K562 (cell line): ENCODE measurements at regions of chr11 and their contacts with region 1.

Region 1: GRCh38 chr11:34600339-34601084 is 20.4 kb upstream of the EHF start:
- DNase-seq: peak; percentile 86 to 93 (median 88)
- ATAC-seq: peak; percentile 82
- H3K4me3 ChIP-seq: no peak overlapping the region
- H3K27ac ChIP-seq: peak overlapping the region; percentile 71
- H3K4me1 ChIP-seq: peaks cover 41 to 63% of the 10 kb centered on the region in 2 experiments
- H3K27me3 ChIP-seq: no peaks in the 10 kb centered on the region
- CTCF ChIP-seq: peak in 1 of 3 experiments; percentile 10; a peak in 1 of 6 replicates
- EP300 ChIP-seq: peak; percentile 92
- POLR2A ChIP-seq: no peak
- RAD21 ChIP-seq: peak in 1 of 2 experiments; percentile 33; a peak in 1 of 4 replicates

Region 2: GRCh38 chr11:34614344-34615104 is 14.0 kb after region 1 on chr11:
- CTCF ChIA-PET with region 1: no interaction called
- POLR2A ChIA-PET with region 1: interaction called, 12 read pairs
- in situ Hi-C with region 1: no loop called
- intact Hi-C with region 1: no loop called
- DNase-seq: no peak
- ATAC-seq: peak; percentile 27; the same call in 1 of the 3 replicates
- H3K4me3 ChIP-seq: no peak overlapping the region
- H3K27ac ChIP-seq: no peak overlapping the region
- H3K4me1 ChIP-seq: peaks cover 4 to 44% of the 10 kb centered on the region in 2 experiments; a peak in 4 of 5 replicates
- H3K27me3 ChIP-seq: no peaks in the 10 kb centered on the region
- CTCF ChIP-seq: no peak
- EP300 ChIP-seq: no peak
- POLR2A ChIP-seq: no peak
- RAD21 ChIP-seq: no peak

Region 3: GRCh38 chr11:34653826-34654490 is 53.4 kb after region 1 on chr11:
- CTCF ChIA-PET with region 1: no interaction called
- POLR2A ChIA-PET with region 1: interaction called, 4 read pairs
- in situ Hi-C with region 1: no loop called
- intact Hi-C with region 1: loop called (anchors 2 kb)
- DNase-seq: peak in 2 of 4 experiments; percentile 24 to 66
- ATAC-seq: peak; percentile 74
- H3K4me3 ChIP-seq: no peak overlapping the region
- H3K27ac ChIP-seq: no peak overlapping the region
- H3K4me1 ChIP-seq: peaks cover 0 to 45% of the 10 kb centered on the region in 2 experiments; a peak in 3 of 5 replicates
- H3K27me3 ChIP-seq: no peaks in the 10 kb centered on the region
- CTCF ChIP-seq: peak; percentile 31 to 55 (median 53); a peak in 5 of 6 replicates
- EP300 ChIP-seq: no peak
- POLR2A ChIP-seq: no peak
- RAD21 ChIP-seq: peak; percentile 58 to 70

Region 4: DNA sequence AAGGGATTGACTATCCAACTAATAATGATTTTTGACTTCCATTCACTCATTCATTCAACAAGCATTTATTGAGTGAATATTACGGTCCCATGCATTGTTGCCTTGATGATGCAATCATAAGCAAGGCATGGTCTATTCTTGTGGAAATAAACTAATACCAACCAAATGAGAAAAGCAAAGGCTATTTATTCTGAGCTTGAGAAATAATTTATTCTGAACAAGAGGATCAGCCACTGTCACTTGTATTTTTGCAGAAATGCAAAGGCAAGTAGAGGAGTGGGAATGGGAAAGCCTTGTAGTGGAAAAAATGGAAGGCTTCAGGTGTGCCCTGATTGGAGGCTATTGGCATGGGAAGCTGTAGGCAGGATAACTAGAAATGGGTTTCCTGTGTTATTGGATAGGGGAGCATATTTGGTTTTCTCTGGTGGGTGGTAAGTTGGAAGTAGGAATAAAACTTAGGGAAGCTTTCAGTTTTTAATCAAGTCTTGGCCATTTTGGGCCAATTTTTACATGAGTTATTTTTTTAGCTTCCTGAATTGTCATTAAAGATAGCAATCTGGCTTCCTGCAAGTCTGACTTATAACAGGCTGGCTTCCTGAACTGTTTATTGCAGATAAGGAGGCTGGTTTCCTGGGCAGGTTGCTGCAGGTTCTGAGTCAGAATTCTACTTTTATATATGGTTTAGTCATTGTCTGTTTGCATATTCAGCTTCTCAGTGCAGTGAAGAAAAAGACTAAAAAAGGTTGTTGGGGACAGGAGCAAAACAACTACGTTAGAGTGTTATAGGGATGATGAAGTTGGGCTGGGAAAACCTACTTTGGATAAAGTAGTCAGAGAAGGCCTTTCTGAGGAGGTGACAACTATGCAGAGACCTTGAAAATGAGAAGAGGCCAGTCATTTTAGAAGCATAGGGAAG is 208.9 kb after region 1 on chr11:
- CTCF ChIA-PET with region 1: no interaction called
- POLR2A ChIA-PET with region 1: no interaction called
- in situ Hi-C with region 1: no loop called
- intact Hi-C with region 1: loop called (anchors 5 kb)
- DNase-seq: peak; percentile 55 to 89 (median 61)
- ATAC-seq: peak; percentile 94
- H3K4me3 ChIP-seq: no peak overlapping the region
- H3K27ac ChIP-seq: peak overlapping the region; percentile 95
- H3K4me1 ChIP-seq: peaks cover 3 to 33% of the 10 kb centered on the region in 2 experiments; a peak in 4 of 5 replicates
- H3K27me3 ChIP-seq: no peaks in the 10 kb centered on the region
- CTCF ChIP-seq: no peak
- EP300 ChIP-seq: peak; percentile 99
- POLR2A ChIP-seq: 0 out of 2 replicates have a peak, but pooled peaks have one; percentile 36
- RAD21 ChIP-seq: peak in 1 of 2 experiments; percentile 16; a peak in 1 of 4 replicates